Heart right ventricle (tissue), 16 donors: ENCODE measurements at regions of chr12 and their contacts with region 1.

Region 1: DNA sequence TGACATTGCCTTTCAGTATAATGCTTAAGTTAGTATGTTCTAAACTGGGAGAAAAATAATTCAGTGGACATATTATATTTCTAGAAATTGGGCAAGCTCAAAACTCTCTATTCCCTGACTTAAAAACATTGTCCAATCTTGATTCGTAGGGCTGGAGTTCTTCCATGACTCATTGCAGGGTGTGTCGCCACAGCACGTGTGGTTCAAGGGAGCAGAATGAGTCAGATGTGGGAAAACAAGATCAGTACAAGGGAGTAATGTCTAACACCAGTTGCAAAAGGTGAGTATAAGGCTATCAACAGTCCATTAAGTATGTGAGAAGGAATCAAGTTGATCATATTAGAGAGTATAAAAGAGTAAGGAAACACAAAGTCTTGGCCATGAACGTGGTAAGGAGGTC is 887.0 kb downstream of the TMTC2 start:
- DNase-seq: no peak
- ATAC-seq: peak in 3 of 8 donors; percentile 25 to 64 (median 42)
- H3K4me3 ChIP-seq: no peak overlapping the region
- H3K27ac ChIP-seq: no peak overlapping the region
- H3K4me1 ChIP-seq: no peaks in the 10 kb centered on the region
- H3K27me3 ChIP-seq: no peaks in the 10 kb centered on the region
- CTCF ChIP-seq: no peak

Region 2: DNA sequence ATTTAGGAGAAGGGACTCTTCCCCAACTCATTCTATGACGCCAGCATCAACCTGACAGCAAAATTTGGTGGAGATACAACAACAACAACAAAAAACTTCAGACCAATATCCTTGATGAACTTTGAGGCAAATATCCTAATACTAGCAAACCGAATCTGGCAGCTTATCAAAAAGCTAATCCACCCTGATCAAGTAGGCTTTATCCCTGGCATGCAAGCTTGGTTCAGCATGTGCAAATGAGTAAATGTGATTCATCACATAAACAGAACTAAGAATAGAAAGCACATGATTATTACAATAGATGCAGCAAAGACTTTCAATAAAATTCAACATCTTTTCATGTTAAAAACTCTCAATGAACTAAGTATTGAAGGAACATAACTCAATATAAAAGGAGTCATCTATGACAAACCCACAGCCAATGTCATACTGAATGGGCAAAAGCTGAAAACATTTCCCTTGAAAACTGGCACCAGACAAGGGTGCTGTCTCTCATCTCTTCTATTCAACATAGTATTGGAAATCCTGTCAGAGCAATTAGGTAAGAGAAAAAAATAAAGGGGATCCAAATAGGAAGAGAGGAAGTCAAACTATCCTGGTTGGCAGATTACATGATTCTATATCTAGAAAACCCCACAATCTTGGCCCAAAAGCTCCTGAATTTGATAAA is 1448.8 kb before region 1 on chr12:
- intact Hi-C with region 1: loop called in 1 of 10 experiments (anchors 5 kb)
- DNase-seq: no peak
- ATAC-seq: no peak
- H3K4me3 ChIP-seq: no peak overlapping the region
- H3K27ac ChIP-seq: no peak overlapping the region
- H3K4me1 ChIP-seq: no peaks in the 10 kb centered on the region
- H3K27me3 ChIP-seq: no peaks in the 10 kb centered on the region
- CTCF ChIP-seq: no peak

Region 3: DNA sequence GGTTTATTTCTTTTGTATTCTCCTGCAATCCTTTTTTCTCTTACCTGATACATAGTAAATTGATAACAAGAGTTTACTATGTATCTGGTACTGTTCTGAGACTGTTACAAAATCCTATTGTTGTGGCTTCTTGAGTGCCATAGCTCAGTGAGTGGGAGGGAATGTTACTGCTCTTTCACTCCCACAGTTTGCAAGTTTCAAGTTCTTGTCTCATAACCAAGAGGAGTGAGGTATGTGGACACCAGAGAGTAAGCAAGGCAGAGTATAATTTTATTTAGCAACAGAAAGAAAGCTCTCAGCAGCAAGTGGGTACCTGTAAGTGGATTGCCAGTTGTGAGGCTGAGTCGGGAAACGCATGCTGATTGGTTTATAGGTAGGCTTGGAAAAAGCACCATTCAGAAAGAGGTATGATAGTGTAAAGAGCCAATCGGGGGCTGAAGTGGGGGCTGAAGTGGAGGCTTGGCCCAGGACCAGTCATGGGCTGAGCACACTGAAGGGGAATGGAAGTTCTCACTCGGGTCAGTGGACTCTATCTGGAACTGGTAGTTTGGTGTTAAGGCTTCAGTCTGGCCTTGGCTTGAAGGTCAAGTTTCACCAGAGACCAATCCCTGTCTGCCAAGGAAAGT is 36.1 kb before region 1 on chr12:
- intact Hi-C with region 1: no loop called
- DNase-seq: no peak
- ATAC-seq: no peak
- H3K4me3 ChIP-seq: no peak overlapping the region
- H3K27ac ChIP-seq: no peak overlapping the region
- H3K4me1 ChIP-seq: no peaks in the 10 kb centered on the region
- H3K27me3 ChIP-seq: no peaks in the 10 kb centered on the region
- CTCF ChIP-seq: no peak

Region 4: DNA sequence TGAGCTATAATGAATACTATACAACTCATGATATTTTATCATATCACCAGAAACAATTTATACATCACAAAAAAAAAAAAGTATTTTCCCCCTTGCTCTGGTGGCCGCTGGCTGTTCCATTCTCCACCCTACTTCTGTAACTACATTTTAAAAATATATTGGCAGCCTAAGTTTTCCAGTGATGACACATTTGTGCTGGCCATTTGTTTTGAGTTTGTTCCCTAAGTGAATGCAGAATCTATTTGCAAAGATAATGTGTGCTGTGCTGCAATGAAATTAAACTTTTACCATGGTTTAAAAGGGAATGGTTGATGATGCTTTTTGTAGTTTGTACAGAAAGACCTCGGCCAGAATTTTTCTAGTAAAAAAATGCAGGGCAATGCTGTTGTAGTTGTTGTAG is 205.9 kb after region 1 on chr12:
- intact Hi-C with region 1: no loop called
- DNase-seq: no peak
- ATAC-seq: no peak
- H3K4me3 ChIP-seq: no peak overlapping the region
- H3K27ac ChIP-seq: no peak overlapping the region
- H3K4me1 ChIP-seq: no peaks in the 10 kb centered on the region
- H3K27me3 ChIP-seq: no peaks in the 10 kb centered on the region
- CTCF ChIP-seq: no peak